Kidney (tissue), 22 donors: ENCODE measurements at regions of chr5 and their contacts with region 1.

Region 1: GRCh38 chr5:58460732-58461286 is 923 bp upstream of the PLK2 start:
- DNase-seq: peak in 4 of 5 donors; percentile 91 to 96 (median 95)
- H3K4me3 ChIP-seq: peak overlapping the region; percentile 16 to 74 (median 58)
- H3K27ac ChIP-seq: peak overlapping the region; percentile 94 to 95
- H3K4me1 ChIP-seq: peaks cover 0 to 3% (median 0%) of the 10 kb centered on the region in 3 donors
- H3K27me3 ChIP-seq: no peaks in the 10 kb centered on the region
- CTCF ChIP-seq: peak; percentile 88

Region 2: DNA sequence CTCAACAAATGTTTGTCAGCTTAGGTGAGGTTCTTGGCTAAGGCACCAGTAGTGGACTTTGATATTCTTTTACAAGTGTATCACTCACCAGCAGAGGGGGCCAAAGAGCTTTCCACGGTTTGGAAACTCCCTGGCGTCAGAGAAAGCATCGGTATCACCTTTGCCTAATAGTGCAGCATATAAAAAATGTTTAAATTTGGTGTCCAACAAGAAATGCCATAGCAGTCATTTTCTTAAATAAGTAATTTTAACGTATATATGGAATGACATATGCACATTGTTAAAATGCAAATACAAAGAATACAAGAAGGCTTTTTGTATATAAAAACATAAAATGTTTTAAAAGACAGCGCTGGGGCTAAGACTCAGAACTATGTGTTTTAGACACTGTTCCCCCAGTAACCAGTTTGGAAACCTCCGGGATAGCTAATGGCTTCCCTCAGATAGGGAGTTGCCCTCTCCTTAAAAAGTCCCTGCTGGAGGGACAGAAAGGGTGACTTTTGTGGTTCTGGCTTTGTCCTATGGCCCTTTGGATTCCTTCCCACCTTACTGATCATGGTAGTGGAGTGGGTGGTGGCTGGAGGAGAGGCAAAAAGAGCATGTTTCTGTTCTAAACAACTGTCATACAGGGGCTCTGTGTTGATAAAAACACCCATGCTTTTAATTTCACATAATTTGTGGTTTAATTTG is 1162.4 kb before region 1 on chr5:
- intact Hi-C with region 1: loop called (anchors 5 kb)
- DNase-seq: peak in 4 of 5 donors; percentile 84 to 95 (median 88)
- H3K4me3 ChIP-seq: peak overlapping the region in 1 of 3 donors; percentile 36
- H3K27ac ChIP-seq: no peak overlapping the region
- H3K4me1 ChIP-seq: peaks cover 0 to 4% (median 4%) of the 10 kb centered on the region in 3 donors
- H3K27me3 ChIP-seq: no peaks in the 10 kb centered on the region
- CTCF ChIP-seq: peak; percentile 83

Region 3: DNA sequence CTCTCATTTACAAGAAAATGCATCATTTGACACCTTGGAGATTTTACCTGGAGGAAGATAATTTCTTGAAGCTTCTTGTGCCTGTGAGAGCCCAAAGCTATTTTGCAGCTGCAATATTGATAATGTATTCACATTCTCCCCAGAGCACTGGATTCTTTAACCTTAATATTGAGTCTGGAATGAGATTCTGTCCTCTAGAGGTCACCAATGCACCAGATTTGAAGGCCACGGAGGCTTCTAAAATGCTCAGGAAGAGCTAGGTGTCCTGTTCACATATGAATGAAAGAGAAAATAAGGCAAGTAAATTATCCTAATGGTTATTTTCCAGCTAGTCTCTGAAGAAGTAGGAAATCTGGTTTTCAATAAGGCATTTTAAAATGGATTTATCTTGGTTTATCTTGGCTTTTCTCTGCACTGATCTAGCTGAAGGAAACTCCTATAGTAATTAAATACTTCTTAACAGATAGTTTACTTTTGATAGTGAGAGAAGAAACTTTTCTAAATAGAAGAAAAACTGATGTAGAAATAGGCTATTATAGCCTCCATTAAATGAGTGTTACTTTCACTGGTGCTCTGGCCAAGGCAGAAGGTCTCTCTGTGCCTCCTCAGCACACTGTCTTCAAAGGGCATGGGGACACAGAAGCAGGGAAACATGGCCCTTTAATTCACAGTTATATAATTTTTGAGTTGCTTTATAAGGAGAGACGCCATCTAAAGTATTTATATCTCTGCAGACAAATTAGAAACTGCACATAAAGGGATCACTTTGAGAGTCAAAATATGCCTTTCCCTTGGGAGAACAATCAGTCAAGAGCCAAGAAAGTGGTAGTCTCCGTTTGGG is 681.2 kb before region 1 on chr5:
- intact Hi-C with region 1: loop called (anchors 10 kb)
- DNase-seq: peak in 4 of 5 donors; percentile 43 to 86 (median 63)
- H3K4me3 ChIP-seq: no peak overlapping the region
- H3K27ac ChIP-seq: no peak overlapping the region
- H3K4me1 ChIP-seq: no peaks in the 10 kb centered on the region
- H3K27me3 ChIP-seq: no peaks in the 10 kb centered on the region
- CTCF ChIP-seq: peak; percentile 67

Region 4: GRCh38 chr5:57965351-57965750 is 495.5 kb before region 1 on chr5:
- intact Hi-C with region 1: no loop called
- DNase-seq: no peak
- H3K4me3 ChIP-seq: no peak overlapping the region
- H3K27ac ChIP-seq: no peak overlapping the region
- H3K4me1 ChIP-seq: no peaks in the 10 kb centered on the region
- H3K27me3 ChIP-seq: no peaks in the 10 kb centered on the region
- CTCF ChIP-seq: no peak